ENCODE measurements at regions of chr9 and their contacts with region 1.

Region 1: GRCh38 chr9:117411548-117411947 is 3.3 kb downstream of the ASTN2 start:
- DNase-seq: peak; percentile 42 to 92 (median 76)

Region 2: GRCh38 chr9:116749176-116749575 is 662.4 kb before region 1 on chr9:
- intact Hi-C with region 1: no loop called
- DNase-seq: no peak

Region 3: DNA sequence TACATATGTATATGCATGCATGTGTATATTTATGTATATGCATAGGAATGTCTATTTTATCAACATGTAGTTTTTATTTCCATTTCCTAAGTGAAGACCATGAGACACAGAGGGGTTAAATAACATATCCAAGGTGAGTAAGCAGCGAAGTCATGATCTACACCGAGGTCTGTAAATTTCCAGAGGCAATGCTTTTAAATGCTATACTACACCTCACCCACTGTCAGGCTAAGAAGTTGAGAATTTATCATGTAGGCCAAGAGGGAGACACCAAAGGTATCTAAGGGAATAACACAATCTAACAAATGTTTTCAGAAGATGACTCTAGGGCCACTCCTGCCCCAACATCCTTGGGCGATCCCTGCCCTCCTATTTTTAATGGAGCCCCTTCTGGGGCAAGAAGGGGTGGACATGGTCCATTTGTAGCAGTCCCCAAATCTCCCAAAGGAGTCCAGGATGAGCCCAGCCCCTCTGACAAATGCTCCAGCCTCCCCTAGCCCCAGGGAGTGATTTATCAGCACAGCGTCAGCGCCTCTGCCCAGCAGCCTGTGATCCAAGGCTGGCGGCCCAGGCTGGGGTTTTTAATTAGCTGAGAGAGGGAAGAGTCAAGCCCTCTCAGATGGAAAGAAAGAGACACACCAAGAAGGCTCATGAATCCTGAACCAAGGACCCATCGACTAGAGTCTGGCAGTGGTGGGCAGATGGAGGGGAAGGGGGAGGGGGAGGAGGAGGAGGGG is 336.6 kb before region 1 on chr9:
- intact Hi-C with region 1: loop called (anchors 5 kb)
- DNase-seq: no peak

Region 4: DNA sequence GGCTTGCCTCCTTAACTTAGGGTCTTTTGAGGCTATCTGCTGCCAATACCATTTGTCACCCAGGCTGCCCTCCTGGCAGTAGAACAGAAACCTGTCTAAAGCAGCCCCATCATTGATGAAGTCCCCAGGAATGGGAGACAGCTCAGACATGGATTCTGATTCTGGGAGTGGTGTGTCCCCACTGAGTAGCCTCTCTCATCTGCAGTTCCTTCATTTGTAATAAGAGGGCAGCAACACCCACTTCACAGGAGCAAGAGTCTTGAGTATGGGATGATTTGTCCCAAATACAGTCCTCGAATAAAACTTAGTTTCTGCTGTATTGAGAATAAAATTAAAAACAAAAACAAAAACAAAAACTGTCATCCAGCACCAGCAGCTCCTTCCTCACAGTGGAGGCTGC is 164.3 kb before region 1 on chr9:
- intact Hi-C with region 1: loop called (anchors 5 kb)
- DNase-seq: peak in 22 of 42 donors; percentile 18 to 80 (median 39)

Region 5: GRCh38 chr9:117464941-117465616 is 53.5 kb after region 1 on chr9:
- intact Hi-C with region 1: loop called (anchors 10 kb)
- DNase-seq: peak; percentile 62 to 97 (median 91)